OCI-LY7 (cell line): ENCODE measurements at regions of chr14 and their contacts with region 1.

Region 1: DNA sequence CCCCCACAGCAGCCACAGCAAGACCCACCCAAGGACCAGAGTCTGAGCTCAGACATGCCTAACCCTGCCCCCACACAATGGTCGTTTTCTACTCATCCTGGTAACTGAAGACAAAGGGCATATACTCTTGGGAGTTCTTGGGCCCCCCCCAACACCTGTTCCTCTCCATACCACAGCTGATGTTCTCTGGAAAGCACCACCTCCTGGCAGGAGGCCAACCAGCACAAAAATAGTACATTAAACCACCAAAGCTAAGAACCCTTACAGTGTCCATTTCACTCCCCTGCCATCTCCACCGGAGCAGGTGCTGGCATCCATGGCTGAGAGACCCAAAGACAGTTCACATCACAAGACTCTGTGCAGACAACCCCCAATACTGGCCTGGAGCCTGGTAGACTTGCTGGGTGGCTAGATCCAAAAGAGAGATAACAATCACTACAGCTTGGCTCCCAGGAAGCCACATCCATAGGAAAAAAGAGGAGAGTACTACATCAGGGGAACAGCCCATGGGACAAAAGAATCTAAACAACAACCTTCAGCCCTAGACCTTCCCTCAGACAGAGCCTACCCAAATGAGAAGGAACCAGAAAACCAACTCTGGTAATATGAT is 80.5 kb upstream of the DAAM1 start:
- DNase-seq: peak; percentile 90
- H3K4me3 ChIP-seq: peak overlapping the region; percentile 35
- H3K27ac ChIP-seq: peak overlapping the region; percentile 68
- H3K4me1 ChIP-seq: peaks cover 38% of the 10 kb centered on the region
- CTCF ChIP-seq: peak; percentile 27; the same call in 1 of the 2 replicates

Region 2: DNA sequence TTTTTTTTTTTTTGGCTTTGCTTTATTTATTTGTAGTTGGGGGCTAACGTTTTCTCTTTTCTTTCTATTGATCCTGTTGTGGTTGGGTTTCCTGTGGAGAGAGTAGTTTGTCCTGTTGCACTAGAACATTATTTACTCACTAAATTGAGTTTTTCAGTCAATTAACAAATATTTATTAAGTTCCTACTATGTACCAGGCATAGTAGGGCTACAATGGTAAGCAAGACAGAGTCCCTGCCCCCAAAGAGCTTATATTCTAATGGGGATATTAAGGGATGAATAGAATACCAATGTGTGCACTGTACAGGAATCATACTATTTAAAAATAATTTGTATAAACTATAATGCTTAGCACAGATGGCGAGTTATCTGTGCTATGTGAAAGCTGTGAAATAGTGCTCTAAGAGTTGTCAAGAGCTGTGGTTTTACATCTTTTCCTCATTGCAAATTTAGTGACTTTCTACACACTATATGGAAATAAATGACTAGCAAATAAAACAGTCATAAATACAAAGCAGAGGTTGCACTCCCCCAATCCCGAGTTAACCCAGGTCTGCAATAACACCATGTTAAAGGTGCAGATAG is 262.3 kb after region 1 on chr14:
- CTCF ChIA-PET with region 1: no interaction called
- POLR2A ChIA-PET with region 1: interaction called, 11 read pairs
- intact Hi-C with region 1: no loop called
- DNase-seq: no peak
- H3K4me3 ChIP-seq: no peak overlapping the region
- H3K27ac ChIP-seq: no peak overlapping the region
- H3K4me1 ChIP-seq: no peaks in the 10 kb centered on the region
- CTCF ChIP-seq: no peak